ENCODE measurements at regions of chr1 and their contacts with region 1.

Region 1: DNA sequence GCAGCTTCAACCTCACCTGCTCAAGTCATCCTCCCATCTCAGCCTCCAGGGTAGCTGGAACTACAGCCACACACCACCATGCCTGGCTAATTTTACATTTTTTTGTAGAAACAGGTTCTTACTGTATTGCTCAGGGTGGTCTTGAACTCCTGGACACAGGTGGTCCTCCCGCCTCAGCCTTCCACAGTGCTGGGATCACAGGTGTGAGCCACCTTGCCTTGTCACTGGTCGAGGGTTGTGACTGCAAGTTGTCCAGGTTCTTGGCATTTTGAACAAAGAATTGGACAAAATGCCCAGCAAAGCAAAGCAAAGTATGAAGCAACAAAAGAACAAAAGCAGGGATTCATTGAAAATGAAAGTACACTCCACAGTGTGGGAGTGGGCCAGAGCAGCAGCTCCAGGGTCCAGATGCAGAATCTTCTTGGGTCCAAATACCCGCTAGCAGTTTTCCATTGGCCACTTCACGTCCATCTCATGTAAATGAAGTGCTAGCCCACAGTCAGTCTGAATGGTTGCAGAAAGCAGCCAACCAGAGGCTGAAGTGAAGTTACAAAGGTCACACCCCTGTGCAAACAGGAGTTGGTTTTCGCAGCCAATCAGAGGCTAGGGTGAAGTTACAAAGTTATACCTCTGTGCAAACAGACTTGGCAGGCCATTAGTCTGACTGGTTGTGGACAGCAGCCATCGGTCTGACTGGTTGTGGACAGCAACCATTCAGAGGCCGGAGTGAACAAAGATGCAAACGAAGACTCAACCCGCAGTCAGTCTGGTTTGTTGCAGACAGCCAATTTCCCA is 109.5 kb upstream of the KIF26B start:
- DNase-seq: no peak
- H3K4me3 ChIP-seq: no peak overlapping the region
- H3K27ac ChIP-seq: no peak overlapping the region
- H3K4me1 ChIP-seq: peaks cover 0 to 9% of the 10 kb centered on the region in 2 experiments; a peak in 1 of 4 replicates
- H3K27me3 ChIP-seq: no peaks in the 10 kb centered on the region
- CTCF ChIP-seq: no peak
- EP300 ChIP-seq: no peak
- RAD21 ChIP-seq: no peak

Region 2: DNA sequence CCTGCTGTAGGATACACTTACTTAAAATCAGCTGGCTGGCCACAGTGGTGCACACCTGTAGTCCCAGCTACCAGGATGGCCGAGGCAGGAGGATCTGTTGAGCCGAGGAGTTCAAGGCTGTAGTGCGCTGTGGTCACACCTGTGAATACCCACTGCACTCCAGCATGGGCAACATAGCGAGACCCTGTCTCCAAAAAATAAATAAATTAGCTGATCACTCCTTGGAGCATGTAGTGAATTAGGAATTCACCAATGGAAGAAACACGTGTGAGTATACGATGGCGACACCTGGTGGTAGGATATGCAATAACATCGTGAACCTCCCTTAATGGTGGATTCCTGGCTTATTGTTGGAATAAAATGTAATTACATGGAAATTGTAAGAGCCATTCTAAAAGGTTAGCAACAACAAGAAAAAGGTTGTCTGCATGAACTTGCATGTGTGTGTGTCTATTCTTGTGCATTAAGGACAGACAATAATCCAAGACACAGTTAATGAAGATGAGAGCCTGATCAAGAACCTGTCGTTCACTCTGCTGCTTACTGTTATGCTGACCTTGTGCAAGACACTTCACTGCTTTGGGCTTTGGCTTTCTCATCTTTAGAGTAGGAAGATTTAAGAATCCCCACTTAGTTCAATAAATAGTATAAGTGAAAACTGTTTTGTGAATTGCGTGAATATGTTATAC is 248.4 kb before region 1 on chr1:
- CTCF ChIA-PET with region 1: interaction called, 25 read pairs
- POLR2A ChIA-PET with region 1: no interaction called
- DNase-seq: peak; percentile 69
- H3K4me3 ChIP-seq: no peak overlapping the region; a peak in 1 of 4 replicates
- H3K27ac ChIP-seq: no peak overlapping the region
- H3K4me1 ChIP-seq: no peaks in the 10 kb centered on the region
- H3K27me3 ChIP-seq: no peaks in the 10 kb centered on the region
- CTCF ChIP-seq: peak; percentile 88
- EP300 ChIP-seq: no peak
- RAD21 ChIP-seq: peak; percentile 92

Region 3: DNA sequence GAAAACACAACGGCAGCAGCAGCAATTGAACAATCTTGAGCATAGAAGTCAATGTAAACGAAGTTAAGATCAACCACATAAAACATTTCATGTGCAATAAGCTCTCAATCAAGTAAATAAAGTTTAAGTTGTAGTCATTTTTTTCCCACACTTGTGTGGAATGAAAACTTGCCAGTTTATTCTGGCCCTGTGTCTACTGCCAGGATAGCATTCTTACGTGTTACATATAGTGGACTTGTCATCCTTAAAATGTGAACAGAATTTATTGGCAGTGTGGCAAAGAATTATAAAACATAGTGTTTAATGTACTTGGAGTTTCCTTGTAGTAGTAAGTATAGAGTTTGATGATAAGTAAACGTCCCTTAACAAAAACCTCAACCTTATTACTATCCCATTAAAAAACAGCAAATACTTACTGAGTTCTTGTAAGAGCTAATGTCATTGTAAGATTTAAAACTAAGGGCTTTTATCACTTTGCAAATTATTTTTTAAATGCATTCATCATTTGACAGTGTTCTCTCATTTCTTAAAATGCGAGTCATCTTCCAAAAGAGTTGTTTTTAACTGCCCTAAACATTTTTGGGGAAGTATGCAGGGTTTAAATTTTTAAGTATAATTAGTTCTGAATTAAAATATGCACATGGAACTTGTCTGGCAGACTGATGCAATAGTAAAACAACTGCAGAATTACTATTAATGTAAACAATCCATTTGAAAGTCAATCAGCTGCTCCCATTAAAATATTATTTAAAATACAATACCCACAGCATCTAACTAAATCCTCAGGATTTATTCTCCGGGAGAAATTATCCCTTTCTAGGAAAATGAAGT is 201.9 kb before region 1 on chr1:
- CTCF ChIA-PET with region 1: interaction called, 10 read pairs
- POLR2A ChIA-PET with region 1: no interaction called
- DNase-seq: no peak
- H3K4me3 ChIP-seq: no peak overlapping the region
- H3K27ac ChIP-seq: peak overlapping the region; percentile 43 to 53; a peak in 3 of 4 replicates
- H3K4me1 ChIP-seq: peaks cover 0 to 10% of the 10 kb centered on the region in 2 experiments; a peak in 1 of 4 replicates
- H3K27me3 ChIP-seq: no peaks in the 10 kb centered on the region
- CTCF ChIP-seq: no peak
- EP300 ChIP-seq: no peak
- RAD21 ChIP-seq: no peak

Region 4: DNA sequence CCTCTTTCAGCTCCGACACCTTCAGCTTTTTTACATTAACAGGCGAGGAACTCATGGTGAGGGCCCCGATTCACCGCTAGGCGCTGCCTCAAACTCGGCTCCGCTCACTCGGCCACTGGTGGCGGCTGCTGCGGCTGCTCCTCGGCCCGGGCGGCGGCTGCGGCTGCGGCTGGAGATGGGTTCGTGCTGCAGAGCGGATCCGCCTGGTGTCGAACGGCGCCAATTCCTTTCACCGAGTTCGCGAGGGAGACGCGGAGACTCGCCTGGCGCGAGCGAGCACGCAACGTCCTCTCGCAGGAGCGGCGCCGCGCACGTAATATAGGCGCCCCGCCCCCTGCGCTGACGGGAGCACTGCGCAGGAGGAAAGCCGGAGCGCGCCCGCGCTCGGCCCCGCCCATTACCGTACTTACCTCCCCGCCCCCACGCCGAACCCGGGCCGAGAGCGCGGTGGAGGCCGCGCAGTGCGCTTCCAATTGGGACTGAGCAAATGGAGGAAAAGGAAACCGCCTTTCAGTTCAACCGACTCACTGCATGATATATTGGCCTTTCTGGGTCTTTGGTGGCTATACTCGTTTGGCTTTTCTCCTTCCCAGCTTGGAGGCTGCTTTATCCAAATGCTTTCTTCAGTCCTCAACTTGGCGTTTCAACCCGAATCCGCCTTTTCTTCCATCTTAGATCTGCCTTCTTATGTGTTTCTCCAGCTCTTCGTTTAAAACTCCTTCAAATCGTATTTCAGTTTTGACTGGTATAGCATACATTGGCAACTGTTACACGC is 180.8 kb before region 1 on chr1 and contains the start of gene HNRNPU:
- CTCF ChIA-PET with region 1: interaction called, 28 read pairs
- POLR2A ChIA-PET with region 1: interaction called, 7 read pairs
- DNase-seq: peak; percentile 93
- H3K4me3 ChIP-seq: peak within 1 kb of the TSS; percentile 99 to 100
- H3K27ac ChIP-seq: peak within 1 kb of the TSS; percentile 96 to 100
- H3K4me1 ChIP-seq: peaks cover 15 to 32% of the 10 kb centered on the region in 2 experiments; a peak in 3 of 4 replicates
- H3K27me3 ChIP-seq: no peaks in the 10 kb centered on the region
- CTCF ChIP-seq: peak; percentile 48
- EP300 ChIP-seq: no peak
- RAD21 ChIP-seq: no peak
- polyA plus RNA-seq, gene HNRNPU: 130 and 164 TPM in 2 replicates

Region 5: DNA sequence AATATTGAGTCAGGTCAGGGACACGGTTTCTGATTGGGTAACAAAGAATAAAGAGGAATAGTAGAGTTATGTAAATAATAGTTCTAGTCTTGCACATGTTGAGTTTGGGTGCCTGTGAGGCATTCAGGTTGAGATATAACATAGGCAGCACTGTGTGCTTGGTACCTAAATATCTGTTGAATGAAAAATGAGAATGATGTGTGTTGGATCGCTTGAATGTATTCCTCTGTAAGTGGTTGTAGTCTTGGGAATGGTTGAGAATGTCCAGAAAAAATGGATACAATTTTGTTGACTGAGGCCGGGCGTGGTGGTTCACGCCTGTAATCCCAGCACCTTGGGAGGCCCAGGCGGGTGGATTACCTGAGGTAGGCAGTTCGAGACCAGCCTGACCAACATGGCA is 64.7 kb before region 1 on chr1:
- CTCF ChIA-PET with region 1: interaction called, 11 read pairs
- POLR2A ChIA-PET with region 1: no interaction called
- DNase-seq: no peak
- H3K4me3 ChIP-seq: no peak overlapping the region
- H3K27ac ChIP-seq: no peak overlapping the region
- H3K4me1 ChIP-seq: no peaks in the 10 kb centered on the region
- H3K27me3 ChIP-seq: no peaks in the 10 kb centered on the region
- CTCF ChIP-seq: no peak
- EP300 ChIP-seq: no peak
- RAD21 ChIP-seq: no peak

Region 6: GRCh38 chr1:245031041-245031440 is 14.2 kb before region 1 on chr1:
- CTCF ChIA-PET with region 1: interaction called, 25 read pairs
- POLR2A ChIA-PET with region 1: no interaction called
- DNase-seq: no peak
- H3K4me3 ChIP-seq: no peak overlapping the region
- H3K27ac ChIP-seq: no peak overlapping the region
- H3K4me1 ChIP-seq: no peaks in the 10 kb centered on the region
- H3K27me3 ChIP-seq: no peaks in the 10 kb centered on the region
- CTCF ChIP-seq: no peak
- EP300 ChIP-seq: no peak
- RAD21 ChIP-seq: no peak

Measured in SK-N-SH (cell line).